ENCODE measurements at regions of chr11 and their contacts with region 1.

Region 1: DNA sequence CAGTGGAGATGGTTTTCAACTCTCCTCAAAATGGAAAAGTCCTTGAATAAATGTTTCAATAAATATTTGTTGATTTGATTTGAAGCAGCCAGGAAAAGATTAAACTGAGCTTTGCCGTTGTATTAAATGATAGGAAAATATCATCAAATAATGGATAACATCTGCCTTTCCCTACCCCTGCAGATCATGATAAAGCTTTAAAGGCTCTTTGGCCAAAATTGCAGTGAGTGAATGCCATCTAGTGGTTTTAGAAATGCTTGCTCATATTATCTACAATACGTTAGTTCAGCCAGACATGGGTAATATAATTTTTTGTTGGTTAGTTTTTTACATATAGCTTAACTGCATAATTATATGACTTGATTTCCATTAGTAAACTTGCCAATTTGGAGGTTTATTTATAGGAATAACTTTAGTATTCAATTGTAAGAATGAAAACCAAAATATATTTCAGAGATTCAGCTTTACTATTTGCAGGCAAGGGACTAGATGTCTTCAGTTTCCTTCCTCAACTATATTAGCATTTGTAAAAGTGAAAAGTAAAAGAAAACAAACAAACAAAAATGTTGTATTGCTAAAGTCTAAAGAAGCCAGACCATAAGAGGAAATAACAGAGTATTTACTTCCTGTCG is 159.2 kb downstream of the MSANTD4 start:
- DNase-seq: peak; percentile 83
- ATAC-seq: peak; percentile 82
- H3K4me3 ChIP-seq: no peak overlapping the region
- H3K27ac ChIP-seq: no peak overlapping the region
- H3K4me1 ChIP-seq: no peaks in the 10 kb centered on the region
- H3K27me3 ChIP-seq: no peaks in the 10 kb centered on the region
- CTCF ChIP-seq: peak; percentile 93

Region 2: GRCh38 chr11:103927535-103927934 is 1935.3 kb before region 1 on chr11:
- CTCF ChIA-PET with region 1: no interaction called
- POLR2A ChIA-PET with region 1: no interaction called
- intact Hi-C with region 1: loop called (anchors 10 kb)
- DNase-seq: peak; percentile 49
- ATAC-seq: peak; percentile 64
- H3K4me3 ChIP-seq: no peak overlapping the region
- H3K27ac ChIP-seq: no peak overlapping the region
- H3K4me1 ChIP-seq: peaks cover 18% of the 10 kb centered on the region
- H3K27me3 ChIP-seq: no peaks in the 10 kb centered on the region
- CTCF ChIP-seq: peak; percentile 83

Region 3: DNA sequence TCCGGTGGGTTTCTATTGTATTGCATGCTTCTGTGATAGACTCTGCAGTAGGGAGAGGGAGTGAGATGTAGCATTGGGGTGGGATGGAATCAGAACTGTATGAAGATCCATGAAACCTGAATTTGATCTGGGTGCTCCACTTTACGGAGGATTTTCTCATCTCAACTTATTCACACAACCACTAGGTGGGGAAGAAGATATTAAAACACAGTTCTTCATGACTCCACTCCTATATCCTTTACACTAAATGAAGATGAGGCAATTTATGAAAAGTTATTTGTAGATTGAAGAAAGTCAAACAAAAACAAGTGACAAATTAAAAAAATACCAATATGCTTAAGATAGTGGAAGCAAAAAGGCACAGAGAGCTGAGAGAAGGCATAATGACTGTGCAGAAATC is 1606.3 kb before region 1 on chr11:
- CTCF ChIA-PET with region 1: no interaction called
- POLR2A ChIA-PET with region 1: no interaction called
- intact Hi-C with region 1: loop called (anchors 5 kb)
- DNase-seq: peak; percentile 42
- ATAC-seq: peak; percentile 56; the same call in 1 of the 2 replicates
- H3K4me3 ChIP-seq: no peak overlapping the region
- H3K27ac ChIP-seq: no peak overlapping the region
- H3K4me1 ChIP-seq: no peaks in the 10 kb centered on the region
- H3K27me3 ChIP-seq: no peaks in the 10 kb centered on the region
- CTCF ChIP-seq: peak; percentile 64

Region 4: GRCh38 chr11:104623518-104623917 is 1239.3 kb before region 1 on chr11:
- CTCF ChIA-PET with region 1: no interaction called
- POLR2A ChIA-PET with region 1: no interaction called
- intact Hi-C with region 1: loop called (anchors 5 kb)
- DNase-seq: peak; percentile 89
- ATAC-seq: peak; percentile 97
- H3K4me3 ChIP-seq: peak overlapping the region; percentile 3; the same call in 1 of the 2 replicates
- H3K27ac ChIP-seq: peak overlapping the region; percentile 16
- H3K4me1 ChIP-seq: peaks cover 26% of the 10 kb centered on the region
- H3K27me3 ChIP-seq: no peaks in the 10 kb centered on the region
- CTCF ChIP-seq: no peak

Region 5: DNA sequence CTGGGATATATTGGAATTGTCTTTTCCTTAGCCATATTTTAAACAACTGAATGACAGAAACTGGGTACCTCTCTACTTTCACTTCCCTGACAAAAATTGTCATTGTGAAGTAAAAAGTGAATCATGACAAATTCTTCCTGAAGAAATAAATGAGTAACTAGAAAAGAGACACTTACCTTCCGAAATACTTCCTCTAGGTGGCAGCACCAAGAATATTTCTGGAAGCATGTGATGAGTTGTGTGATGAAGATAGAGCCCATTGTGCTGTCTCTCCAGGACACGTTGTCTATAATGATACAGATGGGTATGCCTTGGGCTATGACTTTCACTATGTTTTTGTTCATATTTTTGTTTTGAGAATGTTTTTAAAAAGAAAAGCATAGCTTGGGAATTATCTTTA is 915.9 kb before region 1 on chr11:
- CTCF ChIA-PET with region 1: no interaction called
- POLR2A ChIA-PET with region 1: no interaction called
- intact Hi-C with region 1: loop called (anchors 2 kb)
- DNase-seq: peak; percentile 87
- ATAC-seq: peak; percentile 74
- H3K4me3 ChIP-seq: no peak overlapping the region
- H3K27ac ChIP-seq: no peak overlapping the region
- H3K4me1 ChIP-seq: no peaks in the 10 kb centered on the region
- H3K27me3 ChIP-seq: no peaks in the 10 kb centered on the region
- CTCF ChIP-seq: peak; percentile 81

Region 6: GRCh38 chr11:105000797-105001196 is 862.1 kb before region 1 on chr11:
- CTCF ChIA-PET with region 1: interaction called, 3 read pairs
- POLR2A ChIA-PET with region 1: no interaction called
- intact Hi-C with region 1: loop called (anchors 5 kb)
- DNase-seq: no peak
- ATAC-seq: no peak
- H3K4me3 ChIP-seq: no peak overlapping the region
- H3K27ac ChIP-seq: no peak overlapping the region
- H3K4me1 ChIP-seq: no peaks in the 10 kb centered on the region
- H3K27me3 ChIP-seq: no peaks in the 10 kb centered on the region
- CTCF ChIP-seq: peak; percentile 82

Region 7: GRCh38 chr11:105202844-105203548 is 659.9 kb before region 1 on chr11:
- CTCF ChIA-PET with region 1: no interaction called
- POLR2A ChIA-PET with region 1: no interaction called
- intact Hi-C with region 1: loop called (anchors 2 kb)
- DNase-seq: peak; percentile 70
- ATAC-seq: peak; percentile 74
- H3K4me3 ChIP-seq: no peak overlapping the region
- H3K27ac ChIP-seq: peak overlapping the region; percentile 1; the same call in 1 of the 2 replicates
- H3K4me1 ChIP-seq: peaks cover 40% of the 10 kb centered on the region
- H3K27me3 ChIP-seq: no peaks in the 10 kb centered on the region
- CTCF ChIP-seq: no peak